Activated CD4-positive, alpha-beta T cell treated with anti-CD3 and anti-CD28 coated beads, Interleukin-2, amount 10 ng/mL, durations not matched to agents 24 days and 14 days (primary cell): ENCODE measurements at regions of chr7 and their contacts with region 1.

Region 1: DNA sequence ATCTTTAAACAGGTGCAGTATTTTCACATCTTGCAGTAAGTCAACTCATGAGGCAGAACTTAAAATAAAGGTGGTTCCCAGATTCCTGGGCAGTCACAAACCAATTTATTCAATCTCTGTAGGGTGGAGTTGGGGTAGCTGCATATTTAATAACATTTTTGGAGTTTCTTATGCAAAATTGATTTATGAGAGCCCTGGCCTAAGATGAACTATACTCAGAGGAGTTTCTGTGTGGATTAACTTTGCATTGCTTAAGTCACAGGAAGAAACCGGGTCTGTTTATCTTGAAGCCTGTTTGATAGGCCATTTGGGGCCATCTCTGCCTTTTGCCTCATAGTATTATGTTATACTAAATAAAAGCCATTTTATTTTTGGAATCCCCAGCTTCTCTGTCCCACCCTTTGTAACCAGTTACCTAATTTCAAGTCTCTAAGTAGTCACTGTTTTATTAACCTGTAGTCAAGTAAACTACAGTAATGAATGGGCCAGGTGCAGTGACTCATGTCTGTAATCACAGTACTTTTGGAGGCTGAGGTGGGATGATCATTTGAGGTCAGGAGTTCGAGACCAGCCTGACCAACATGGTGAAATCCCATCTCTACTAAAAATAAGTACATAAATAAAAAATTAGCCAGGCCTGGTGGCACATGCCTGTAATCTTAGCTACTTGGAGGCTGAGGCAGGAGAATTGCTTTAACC is 104.4 kb upstream of the FAM3C start:
- DNase-seq: no peak
- H3K4me3 Mint-ChIP-seq: no peak overlapping the region
- H3K27ac Mint-ChIP-seq: peak overlapping the region; percentile 94
- H3K4me1 Mint-ChIP-seq: peaks cover 26% of the 10 kb centered on the region
- H3K27me3 Mint-ChIP-seq: no peaks in the 10 kb centered on the region

Region 2: DNA sequence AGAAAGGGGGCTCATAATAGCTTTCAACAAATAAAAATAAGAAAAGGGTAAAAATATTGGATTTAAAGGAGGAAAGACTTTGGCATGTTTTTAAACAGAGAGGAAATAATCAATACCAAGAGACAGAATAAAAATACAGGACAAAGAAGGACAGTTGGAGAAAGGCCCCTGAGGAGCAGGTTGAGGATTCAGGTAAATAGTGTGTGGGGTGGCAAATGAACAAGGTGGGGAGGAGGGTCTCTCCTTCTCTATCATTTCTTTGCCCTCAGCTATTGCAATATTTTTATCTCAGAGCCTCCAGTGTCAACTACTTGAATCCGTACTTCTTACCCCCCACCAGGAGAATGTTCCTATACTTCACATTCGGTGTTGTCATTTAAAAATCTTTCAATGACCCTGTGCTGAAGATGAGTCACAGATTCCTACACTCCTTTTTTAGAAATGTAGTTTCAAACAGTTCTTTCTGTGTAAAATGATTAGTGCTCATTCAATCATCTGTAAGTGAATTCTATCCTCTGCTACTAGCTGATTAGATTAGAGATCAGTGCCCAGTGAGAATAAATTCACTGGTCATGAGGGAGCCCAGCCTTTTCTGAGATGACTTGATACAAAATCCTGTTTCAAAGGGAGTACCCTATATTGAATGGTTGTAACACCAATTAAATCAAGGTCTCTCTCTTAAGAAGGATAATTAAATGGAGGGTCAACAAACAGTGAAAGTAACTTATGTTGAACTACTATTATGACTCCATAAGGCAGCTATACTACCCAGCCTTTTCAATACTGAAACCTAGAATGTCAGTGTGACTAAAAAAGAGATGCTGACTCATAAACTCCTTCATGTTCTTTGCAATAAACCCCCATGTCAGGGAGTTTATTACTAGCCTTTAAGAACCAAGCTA is 222.1 kb before region 1 on chr7:
- intact Hi-C with region 1: loop called (anchors 1 kb)
- DNase-seq: no peak
- H3K4me3 Mint-ChIP-seq: peak overlapping the region; percentile 29
- H3K27ac Mint-ChIP-seq: peak overlapping the region; percentile 70
- H3K4me1 Mint-ChIP-seq: peaks cover 19% of the 10 kb centered on the region
- H3K27me3 Mint-ChIP-seq: peaks cover 18% of the 10 kb centered on the region

Region 3: GRCh38 chr7:121372376-121373010 is 128.0 kb before region 1 on chr7:
- intact Hi-C with region 1: loop called (anchors 1 kb)
- DNase-seq: no peak
- H3K4me3 Mint-ChIP-seq: peak overlapping the region; percentile 61
- H3K27ac Mint-ChIP-seq: peak overlapping the region; percentile 79
- H3K4me1 Mint-ChIP-seq: peaks cover 41% of the 10 kb centered on the region
- H3K27me3 Mint-ChIP-seq: no peaks in the 10 kb centered on the region

Region 4: GRCh38 chr7:121437456-121438127 is 62.9 kb before region 1 on chr7:
- intact Hi-C with region 1: loop called (anchors 1 kb)
- DNase-seq: no peak
- H3K4me3 Mint-ChIP-seq: peak overlapping the region; percentile 73
- H3K27ac Mint-ChIP-seq: peak overlapping the region; percentile 92
- H3K4me1 Mint-ChIP-seq: peaks cover 36% of the 10 kb centered on the region
- H3K27me3 Mint-ChIP-seq: no peaks in the 10 kb centered on the region

Region 5: GRCh38 chr7:121530227-121531174 is 30.0 kb after region 1 on chr7:
- intact Hi-C with region 1: loop called (anchors 1 kb)
- DNase-seq: peak; percentile 89
- H3K4me3 Mint-ChIP-seq: peak overlapping the region; percentile 63
- H3K27ac Mint-ChIP-seq: peak overlapping the region; percentile 96
- H3K4me1 Mint-ChIP-seq: peaks cover 47% of the 10 kb centered on the region
- H3K27me3 Mint-ChIP-seq: no peaks in the 10 kb centered on the region

Region 6: DNA sequence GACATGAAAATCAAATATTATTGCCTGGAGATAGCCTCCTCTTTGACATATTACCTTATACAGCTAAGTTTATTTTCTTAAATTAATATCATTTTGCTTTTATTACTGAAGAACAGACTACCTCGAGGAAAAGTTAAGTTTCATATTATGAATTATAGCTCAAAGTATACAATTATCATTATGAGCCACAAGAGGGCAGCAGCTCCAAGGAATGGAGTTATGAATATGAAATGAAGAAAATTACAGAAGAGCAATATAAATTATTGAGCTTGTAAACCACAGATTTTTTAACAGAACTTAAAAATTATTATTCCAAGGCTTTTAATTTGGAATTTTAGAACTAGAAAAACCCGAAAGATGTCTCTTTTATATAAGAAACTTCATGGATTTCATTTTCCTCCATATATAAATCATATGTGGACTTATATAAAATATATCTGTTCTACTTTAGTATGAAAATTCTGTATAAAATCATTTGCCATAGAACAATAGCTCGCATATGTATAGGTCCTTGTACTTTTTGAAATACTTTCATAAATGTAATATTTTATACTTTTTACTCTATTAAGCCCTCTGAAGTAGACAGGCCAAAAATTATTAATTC is 1993.8 kb after region 1 on chr7:
- intact Hi-C with region 1: no loop called
- DNase-seq: peak; percentile 73
- H3K4me3 Mint-ChIP-seq: no peak overlapping the region
- H3K27ac Mint-ChIP-seq: no peak overlapping the region
- H3K4me1 Mint-ChIP-seq: no peaks in the 10 kb centered on the region
- H3K27me3 Mint-ChIP-seq: peaks cover 6% of the 10 kb centered on the region